Mammary epithelial cell (primary cell): ENCODE measurements at regions of chr15 and their contacts with region 1.

Region 1: DNA sequence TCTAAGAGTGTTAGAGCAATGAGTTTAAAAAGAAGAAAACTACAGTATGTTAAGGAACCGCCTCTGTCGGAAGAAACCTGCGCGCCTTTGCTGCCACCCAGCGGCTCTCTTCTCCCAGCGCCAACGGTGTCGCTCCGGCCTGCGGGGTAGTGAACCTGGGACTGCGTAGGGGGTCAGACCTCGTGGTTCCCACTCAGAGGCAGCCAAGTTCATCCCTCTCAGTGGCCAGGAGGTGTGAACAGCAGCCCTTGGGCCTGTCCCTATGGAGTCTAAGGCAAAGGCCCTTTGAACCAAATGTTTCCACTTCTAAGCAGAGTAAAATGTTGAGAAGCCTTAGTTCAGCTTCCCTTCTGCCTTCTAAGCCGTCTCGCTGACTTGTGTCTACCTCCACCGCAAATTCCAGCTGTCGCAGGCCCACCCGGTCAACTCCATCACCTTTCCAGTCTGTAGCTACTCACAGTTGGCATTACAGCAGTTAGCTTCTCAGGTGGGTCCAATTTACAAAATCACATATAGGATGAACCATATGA is 980 bp upstream of the RAB27A start:
- DNase-seq: peak; percentile 70
- H3K4me3 ChIP-seq: peak overlapping the region; percentile 76 to 84 (median 82)
- H3K27ac ChIP-seq: peak overlapping the region; percentile 83
- H3K4me1 ChIP-seq: peaks cover 5% of the 10 kb centered on the region
- H3K27me3 ChIP-seq: no peaks in the 10 kb centered on the region
- CTCF ChIP-seq: peak; percentile 86 to 92

Region 2: DNA sequence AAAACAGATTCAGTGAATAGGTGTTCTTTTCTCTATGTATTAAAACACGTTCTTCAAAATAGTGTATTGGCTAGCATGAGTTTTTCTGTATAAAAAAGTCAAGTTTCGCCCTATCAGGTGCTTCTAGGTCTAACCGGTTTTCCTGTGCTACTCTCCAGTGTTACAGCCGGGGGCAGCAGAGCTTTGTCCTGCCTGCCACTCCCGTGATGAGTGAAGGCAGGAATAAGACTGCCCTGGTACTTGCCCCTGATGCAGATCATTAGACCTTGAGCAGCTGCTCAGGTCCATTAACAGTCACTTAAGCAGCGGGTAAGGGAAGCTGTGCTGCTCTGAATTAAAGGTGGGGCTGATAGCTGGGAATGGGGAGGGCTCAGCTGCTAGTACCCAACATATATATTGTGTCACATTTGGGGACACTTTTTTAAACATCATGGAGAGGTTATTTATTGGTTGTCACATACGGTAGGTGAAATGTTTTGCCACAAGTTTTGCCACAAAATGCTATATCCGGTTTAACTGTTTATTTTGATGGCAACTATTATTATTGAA is 1313.7 kb before region 1 on chr15:
- CTCF ChIA-PET with region 1: no interaction called
- dilution Hi-C with region 1: no loop called
- in situ Hi-C with region 1: no loop called
- intact Hi-C with region 1: loop called (anchors 5 kb)
- DNase-seq: no peak
- H3K4me3 ChIP-seq: no peak overlapping the region
- H3K27ac ChIP-seq: no peak overlapping the region
- H3K4me1 ChIP-seq: peaks cover 8% of the 10 kb centered on the region
- H3K27me3 ChIP-seq: peaks cover 8% of the 10 kb centered on the region
- CTCF ChIP-seq: peak; percentile 24 to 57

Region 3: DNA sequence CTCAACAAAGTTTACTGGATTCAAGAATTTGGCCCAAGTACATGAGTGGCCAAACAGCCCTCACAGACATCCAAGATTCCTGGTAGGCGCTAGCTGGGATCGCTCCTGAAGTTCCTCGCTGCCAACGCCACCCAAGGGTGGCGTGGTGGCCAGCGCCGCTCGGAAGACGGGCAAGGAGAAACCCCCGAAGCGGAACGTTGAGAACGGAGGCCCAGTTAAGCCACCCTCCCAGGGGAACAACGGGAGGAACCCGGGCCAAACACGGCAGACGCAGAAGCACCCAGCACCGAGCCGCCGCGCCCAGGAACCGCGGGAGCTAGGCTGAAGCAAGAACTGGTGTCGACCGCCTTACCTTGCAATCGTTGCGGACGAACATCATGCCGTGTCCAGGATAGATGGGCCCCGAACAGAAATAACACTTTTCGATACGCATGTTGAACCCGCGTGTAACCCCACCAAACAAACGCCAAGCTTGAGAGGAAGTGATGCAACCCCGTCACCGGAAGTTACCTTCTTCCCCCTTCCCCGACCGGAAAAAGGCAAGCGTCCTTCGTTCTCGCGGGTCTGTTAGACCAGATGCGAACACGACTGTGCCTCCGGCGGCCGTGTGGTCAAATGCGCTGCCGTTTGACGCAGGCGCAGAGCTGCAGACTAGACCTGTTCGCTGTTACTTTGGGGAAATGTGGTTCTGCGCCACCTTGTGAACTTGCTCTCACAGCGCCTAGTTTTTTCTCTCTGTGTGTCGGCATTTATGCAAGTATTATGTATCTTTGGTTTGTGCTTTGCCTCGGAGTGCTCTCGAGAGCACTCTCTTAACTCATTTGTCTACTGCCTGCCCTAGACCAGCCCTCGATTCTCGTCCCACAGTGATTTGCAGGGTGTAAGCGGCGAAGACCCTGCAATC is 93.9 kb before region 1 on chr15 and contains the start of gene RSL24D1:
- CTCF ChIA-PET with region 1: no interaction called
- dilution Hi-C with region 1: no loop called
- in situ Hi-C with region 1: no loop called
- intact Hi-C with region 1: loop called (anchors 1 kb)
- DNase-seq: peak; percentile 99
- H3K4me3 ChIP-seq: peak within 1 kb of the TSS; percentile 65 to 97 (median 89)
- H3K27ac ChIP-seq: peak within 1 kb of the TSS; percentile 91
- H3K4me1 ChIP-seq: peaks cover 13% of the 10 kb centered on the region
- H3K27me3 ChIP-seq: no peaks in the 10 kb centered on the region
- CTCF ChIP-seq: peak; percentile 25 to 49
- total RNA-seq, gene RSL24D1: 94.7 to 114 TPM

Region 4: GRCh38 chr15:55250392-55250791 is 40.2 kb before region 1 on chr15:
- CTCF ChIA-PET with region 1: no interaction called
- dilution Hi-C with region 1: no loop called
- in situ Hi-C with region 1: no loop called
- intact Hi-C with region 1: loop called (anchors 1 kb)
- DNase-seq: peak; percentile 75
- H3K4me3 ChIP-seq: no peak overlapping the region
- H3K27ac ChIP-seq: peak overlapping the region; percentile 28
- H3K4me1 ChIP-seq: peaks cover 29% of the 10 kb centered on the region
- H3K27me3 ChIP-seq: no peaks in the 10 kb centered on the region
- CTCF ChIP-seq: no peak